Mammary epithelial cell (primary cell): ENCODE measurements at regions of chr12 and their contacts with region 1.

Region 1: GRCh38 chr12:3632256-3633240 is 120.4 kb downstream of the CRACR2A start:
- DNase-seq: no peak
- H3K4me3 ChIP-seq: no peak overlapping the region
- H3K27ac ChIP-seq: no peak overlapping the region
- H3K4me1 ChIP-seq: no peaks in the 10 kb centered on the region
- H3K27me3 ChIP-seq: no peaks in the 10 kb centered on the region
- CTCF ChIP-seq: no peak

Region 2: DNA sequence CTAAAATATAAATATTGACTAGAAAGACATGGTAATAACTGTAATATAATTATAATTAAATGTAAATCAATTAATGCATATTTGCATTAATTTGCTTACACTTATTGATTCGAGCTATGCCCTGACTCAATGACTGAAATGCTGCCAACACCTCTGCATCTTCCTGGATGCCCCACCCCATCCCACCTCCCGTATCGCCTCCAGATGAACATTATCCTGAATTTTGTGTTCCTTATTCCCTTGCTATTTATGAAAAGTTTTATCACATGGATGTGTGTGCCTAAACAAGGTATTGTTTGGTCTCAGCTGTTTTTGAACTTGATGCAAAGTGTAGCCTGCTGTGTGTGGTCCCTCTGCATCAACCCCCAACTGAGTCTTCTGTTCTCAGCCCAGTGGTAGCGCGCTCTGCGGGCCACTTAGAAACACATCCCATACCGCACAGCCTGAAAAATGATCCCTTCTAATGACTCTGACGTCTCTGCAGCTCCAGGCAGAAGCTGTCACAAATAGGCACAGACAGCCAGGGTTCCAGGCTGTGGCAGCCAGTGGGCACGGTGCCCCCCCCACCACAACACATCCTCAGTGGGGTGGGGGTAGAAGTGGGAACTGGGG is 45.0 kb before region 1 on chr12:
- CTCF ChIA-PET with region 1: no interaction called
- dilution Hi-C with region 1: loop called (anchors 5 kb)
- in situ Hi-C with region 1: no loop called
- intact Hi-C with region 1: no loop called
- DNase-seq: no peak
- H3K4me3 ChIP-seq: no peak overlapping the region
- H3K27ac ChIP-seq: no peak overlapping the region
- H3K4me1 ChIP-seq: no peaks in the 10 kb centered on the region
- H3K27me3 ChIP-seq: no peaks in the 10 kb centered on the region
- CTCF ChIP-seq: no peak

Region 3: GRCh38 chr12:3658327-3659163 is 26.0 kb after region 1 on chr12:
- CTCF ChIA-PET with region 1: interaction called, 12 read pairs
- dilution Hi-C with region 1: no loop called
- in situ Hi-C with region 1: no loop called
- intact Hi-C with region 1: no loop called
- DNase-seq: peak; percentile 6
- H3K4me3 ChIP-seq: no peak overlapping the region
- H3K27ac ChIP-seq: no peak overlapping the region
- H3K4me1 ChIP-seq: peaks cover 3% of the 10 kb centered on the region
- H3K27me3 ChIP-seq: peaks cover 10% of the 10 kb centered on the region
- CTCF ChIP-seq: peak; percentile 36 to 39